Left cardiac atrium (tissue), 4 donors: ENCODE measurements at regions of chr3 and their contacts with region 1.

Region 1: GRCh38 chr3:15815696-15816095 is 17.9 kb upstream of the ANKRD28 start:
- DNase-seq: no peak
- ATAC-seq: peak; percentile 42 to 55

Region 2: DNA sequence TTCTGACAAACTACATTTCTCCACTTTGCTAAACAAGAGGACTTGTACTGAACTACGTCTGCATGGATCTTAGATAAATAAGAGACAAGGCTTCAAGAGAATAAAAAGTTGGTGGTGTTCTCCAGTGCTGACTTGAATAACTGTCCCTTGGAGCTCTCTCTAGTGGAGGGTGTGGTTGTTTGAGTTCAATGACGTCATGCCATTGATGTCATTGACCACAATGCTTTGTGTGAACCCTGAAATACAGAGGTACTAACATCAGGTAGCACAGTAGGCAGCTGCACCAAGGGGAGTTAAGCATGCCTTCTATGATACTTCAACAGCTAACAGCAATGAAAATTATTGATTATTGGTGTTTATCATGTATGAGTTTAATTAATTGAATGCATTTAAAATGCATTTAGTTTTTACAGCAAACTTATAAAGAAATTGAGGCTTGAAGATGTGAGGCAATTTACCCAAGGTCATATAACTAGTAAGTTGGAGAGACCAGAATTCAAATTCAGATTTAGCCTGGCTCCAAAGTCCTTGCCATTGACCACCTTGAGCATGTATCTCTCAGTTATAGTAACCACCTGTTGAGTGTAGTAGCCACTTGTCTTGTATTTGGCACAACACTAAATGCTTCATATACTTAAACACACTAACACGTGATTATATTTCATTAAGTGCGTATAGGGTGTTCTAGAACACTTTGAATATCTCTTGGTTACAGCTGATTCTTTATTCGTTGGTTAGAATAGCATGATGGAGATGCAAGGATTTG is 108.1 kb after region 1 on chr3:
- intact Hi-C with region 1: no loop called
- DNase-seq: no peak
- ATAC-seq: no peak

Region 3: DNA sequence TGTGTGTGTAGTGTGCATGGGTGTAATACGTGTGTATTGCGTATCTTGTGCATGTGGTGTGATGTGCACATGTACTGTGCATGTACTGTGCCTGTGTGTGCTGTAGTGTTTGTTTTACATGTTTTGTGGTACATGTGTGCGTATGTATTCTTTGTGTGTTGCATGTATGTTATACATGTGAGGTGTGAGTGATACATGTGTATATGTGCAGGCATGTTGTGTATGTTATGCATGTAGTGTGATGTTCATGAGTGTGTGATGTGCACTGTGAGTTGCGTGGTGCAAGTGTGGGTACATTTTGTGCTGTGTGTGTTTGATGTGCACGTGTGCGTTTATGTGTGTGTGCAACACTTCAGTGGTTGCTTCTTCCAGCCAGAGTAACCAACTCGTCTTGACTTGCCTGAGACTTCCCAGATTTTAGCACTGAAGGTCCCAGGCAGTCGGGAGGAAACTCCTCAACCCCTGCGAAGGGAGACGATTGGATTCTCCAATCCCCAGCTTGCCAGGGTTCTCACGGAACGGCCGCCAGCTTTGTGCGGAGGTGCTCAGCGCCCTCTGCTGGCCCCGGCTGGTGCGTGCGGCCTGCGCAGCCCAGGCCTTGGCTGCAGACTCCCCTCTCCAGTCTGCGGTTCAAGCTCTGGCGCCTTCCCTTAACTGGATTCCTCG is 362.4 kb after region 1 on chr3:
- intact Hi-C with region 1: loop called in 1 of 2 experiments (anchors 10 kb)
- DNase-seq: peak; percentile 83
- ATAC-seq: peak; percentile 68 to 76